HepG2 (cell line): ENCODE measurements at regions of chr12 and their contacts with region 1.

Region 1: GRCh38 chr12:15220994-15221885 is at the start of gene RERG:
- DNase-seq: peak; percentile 44
- ATAC-seq: peak; percentile 100
- H3K4me3 ChIP-seq: peak within 1 kb of the TSS in 2 of 3 experiments; percentile 14 to 58; a peak in 1 of 6 replicates
- H3K27ac ChIP-seq: no peak within 1 kb of the TSS
- H3K4me1 ChIP-seq: peaks cover 5% of the 10 kb centered on the region; the same call in 1 of the 2 replicates
- H3K27me3 ChIP-seq: peaks cover 3 to 7% of the 10 kb centered on the region in 2 experiments; a peak in 3 of 5 replicates
- CTCF ChIP-seq: peak; percentile 92
- EP300 ChIP-seq: no peak
- POLR2A ChIP-seq: no peak
- RAD21 ChIP-seq: peak; percentile 89
- total RNA-seq, gene RERG: not detected in 2 replicates

Region 2: DNA sequence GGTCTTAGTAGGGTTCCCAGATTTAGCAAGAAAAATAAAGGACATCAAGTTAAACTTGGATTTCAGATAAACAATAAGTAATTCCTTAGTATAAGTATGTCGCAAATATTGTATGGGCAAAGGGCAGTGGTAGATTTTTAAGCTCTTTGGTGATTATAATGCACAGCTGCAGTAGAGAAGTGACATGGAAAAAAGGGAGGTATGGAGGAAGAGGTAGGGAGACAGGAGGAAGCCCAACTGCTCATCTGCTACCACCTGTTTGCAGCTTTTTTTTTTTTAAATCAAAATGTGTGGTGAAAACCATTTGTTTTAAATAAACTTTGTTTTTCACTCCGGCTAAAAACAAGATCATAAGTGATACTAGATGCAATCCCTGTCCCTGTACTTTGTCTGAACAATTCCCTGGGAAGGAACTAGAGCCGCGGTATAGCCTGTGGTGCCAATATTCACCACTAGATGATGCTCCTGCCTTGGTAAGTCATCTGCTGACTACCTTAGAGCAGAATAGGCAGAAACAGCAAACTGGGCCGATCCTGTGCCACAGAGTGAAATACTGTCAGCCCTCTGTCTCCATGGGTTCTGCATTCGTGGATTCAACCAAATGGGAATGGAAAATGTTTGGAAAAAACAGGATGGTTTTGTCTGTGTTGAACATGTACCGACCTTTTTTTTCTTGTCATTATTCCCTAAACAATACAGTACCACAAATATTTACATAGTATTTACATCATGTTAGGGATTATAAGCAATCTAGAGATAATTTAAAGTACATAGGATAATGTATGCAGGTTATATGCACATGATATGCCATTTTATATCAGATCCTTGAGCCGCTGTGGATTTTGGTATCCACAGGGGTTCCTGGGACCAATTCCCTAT is 591.2 kb before region 1 on chr12:
- CTCF ChIA-PET with region 1: interaction called, 3 read pairs
- POLR2A ChIA-PET with region 1: no interaction called
- in situ Hi-C with region 1: no loop called
- intact Hi-C with region 1: loop called (anchors 1 kb)
- DNase-seq: peak; percentile 44
- ATAC-seq: peak; percentile 100
- H3K4me3 ChIP-seq: no peak overlapping the region
- H3K27ac ChIP-seq: no peak overlapping the region
- H3K4me1 ChIP-seq: no peaks in the 10 kb centered on the region
- H3K27me3 ChIP-seq: no peaks in the 10 kb centered on the region
- CTCF ChIP-seq: peak; percentile 91
- EP300 ChIP-seq: no peak
- POLR2A ChIP-seq: no peak
- RAD21 ChIP-seq: peak; percentile 72

Region 3: DNA sequence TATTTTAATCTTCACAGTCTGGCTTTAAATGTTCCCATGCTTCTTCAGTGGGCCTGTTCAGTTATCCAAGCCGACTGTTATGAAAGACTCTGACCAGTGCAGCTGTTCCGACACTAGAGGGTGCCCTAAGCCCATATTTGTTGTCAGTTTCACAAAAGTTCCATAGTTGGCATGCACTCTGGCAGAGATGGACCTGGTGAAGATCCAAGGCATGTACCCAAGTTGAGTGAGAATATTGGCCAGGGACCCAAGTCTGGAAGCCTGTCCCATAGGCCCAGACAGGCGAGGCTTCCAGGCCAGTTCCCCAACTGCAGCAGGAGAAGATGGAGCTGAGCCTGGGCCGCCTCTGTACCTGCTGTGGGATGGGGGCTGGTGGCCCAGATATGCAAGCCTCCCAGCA is 497.5 kb before region 1 on chr12:
- CTCF ChIA-PET with region 1: interaction called, 14 read pairs
- POLR2A ChIA-PET with region 1: no interaction called
- in situ Hi-C with region 1: loop called (anchors 25 kb)
- intact Hi-C with region 1: loop called (anchors 1 kb)
- DNase-seq: peak; percentile 54
- ATAC-seq: peak; percentile 96
- H3K4me3 ChIP-seq: no peak overlapping the region
- H3K27ac ChIP-seq: no peak overlapping the region
- H3K4me1 ChIP-seq: no peaks in the 10 kb centered on the region
- H3K27me3 ChIP-seq: no peaks in the 10 kb centered on the region
- CTCF ChIP-seq: peak; percentile 92
- EP300 ChIP-seq: no peak
- POLR2A ChIP-seq: no peak
- RAD21 ChIP-seq: peak; percentile 79

Region 4: GRCh38 chr12:14741153-14741552 is 480.1 kb before region 1 on chr12:
- CTCF ChIA-PET with region 1: no interaction called
- POLR2A ChIA-PET with region 1: no interaction called
- in situ Hi-C with region 1: loop called (anchors 25 kb)
- intact Hi-C with region 1: no loop called
- DNase-seq: peak; percentile 30
- ATAC-seq: peak; percentile 99
- H3K4me3 ChIP-seq: no peak overlapping the region
- H3K27ac ChIP-seq: peak overlapping the region; percentile 40
- H3K4me1 ChIP-seq: peaks cover 15% of the 10 kb centered on the region
- H3K27me3 ChIP-seq: no peaks in the 10 kb centered on the region
- CTCF ChIP-seq: no peak
- EP300 ChIP-seq: peak in 1 of 2 experiments; percentile 51; a peak in 2 of 4 replicates
- POLR2A ChIP-seq: no peak
- RAD21 ChIP-seq: no peak

Region 5: GRCh38 chr12:15151161-15152120 is 69.8 kb before region 1 on chr12:
- CTCF ChIA-PET with region 1: interaction called, 13 read pairs
- POLR2A ChIA-PET with region 1: no interaction called
- in situ Hi-C with region 1: no loop called
- intact Hi-C with region 1: loop called (anchors 1 kb)
- DNase-seq: peak; percentile 5
- ATAC-seq: peak; percentile 53; the same call in 2 of the 3 replicates
- H3K4me3 ChIP-seq: no peak overlapping the region
- H3K27ac ChIP-seq: no peak overlapping the region
- H3K4me1 ChIP-seq: no peaks in the 10 kb centered on the region
- H3K27me3 ChIP-seq: 0 out of 5 replicates have a peak, but pooled peaks cover 0 to 3% of the 10 kb centered on the region in 2 experiments
- CTCF ChIP-seq: peak; percentile 43
- EP300 ChIP-seq: no peak
- POLR2A ChIP-seq: no peak
- RAD21 ChIP-seq: no peak

Region 6: DNA sequence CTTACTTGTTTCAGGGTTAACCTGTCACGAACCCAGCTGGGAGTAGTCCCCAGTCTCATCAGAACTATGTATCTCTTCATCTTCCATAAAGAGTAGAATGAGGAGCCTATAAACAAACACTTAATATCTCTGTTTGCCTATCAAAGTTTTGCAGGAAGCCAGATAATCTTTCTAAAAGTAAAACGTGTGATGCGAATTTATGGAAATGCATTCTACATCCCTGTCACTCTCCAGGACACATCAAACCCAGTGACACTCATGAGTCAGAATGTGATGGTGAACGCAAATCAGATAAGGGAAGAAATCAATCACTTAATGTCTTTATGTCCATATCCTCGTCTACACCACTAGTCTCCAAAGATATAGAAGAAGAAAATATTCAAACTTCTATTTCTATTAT is 37.4 kb before region 1 on chr12:
- CTCF ChIA-PET with region 1: interaction called, 7 read pairs
- POLR2A ChIA-PET with region 1: no interaction called
- in situ Hi-C with region 1: no loop called
- intact Hi-C with region 1: loop called (anchors 2 kb)
- DNase-seq: no peak
- ATAC-seq: no peak
- H3K4me3 ChIP-seq: no peak overlapping the region
- H3K27ac ChIP-seq: no peak overlapping the region
- H3K4me1 ChIP-seq: no peaks in the 10 kb centered on the region
- H3K27me3 ChIP-seq: no peaks in the 10 kb centered on the region
- CTCF ChIP-seq: no peak
- EP300 ChIP-seq: no peak
- POLR2A ChIP-seq: no peak
- RAD21 ChIP-seq: no peak

Region 7: GRCh38 chr12:15268927-15269552 is 47.8 kb after region 1 on chr12:
- CTCF ChIA-PET with region 1: no interaction called
- POLR2A ChIA-PET with region 1: no interaction called
- in situ Hi-C with region 1: no loop called
- intact Hi-C with region 1: no loop called
- DNase-seq: peak; percentile 64
- ATAC-seq: peak; percentile 76
- H3K4me3 ChIP-seq: no peak overlapping the region
- H3K27ac ChIP-seq: no peak overlapping the region
- H3K4me1 ChIP-seq: no peaks in the 10 kb centered on the region
- H3K27me3 ChIP-seq: no peaks in the 10 kb centered on the region; a peak in 1 of 5 replicates
- CTCF ChIP-seq: peak; percentile 82
- EP300 ChIP-seq: no peak
- POLR2A ChIP-seq: no peak
- RAD21 ChIP-seq: peak; percentile 42; the same call in 1 of the 2 replicates